Activated CD4-positive, alpha-beta T cell treated with anti-CD3 and anti-CD28 coated beads for 36 hours (primary cell): ENCODE measurements at regions of chr1 and their contacts with region 1.

Region 1: DNA sequence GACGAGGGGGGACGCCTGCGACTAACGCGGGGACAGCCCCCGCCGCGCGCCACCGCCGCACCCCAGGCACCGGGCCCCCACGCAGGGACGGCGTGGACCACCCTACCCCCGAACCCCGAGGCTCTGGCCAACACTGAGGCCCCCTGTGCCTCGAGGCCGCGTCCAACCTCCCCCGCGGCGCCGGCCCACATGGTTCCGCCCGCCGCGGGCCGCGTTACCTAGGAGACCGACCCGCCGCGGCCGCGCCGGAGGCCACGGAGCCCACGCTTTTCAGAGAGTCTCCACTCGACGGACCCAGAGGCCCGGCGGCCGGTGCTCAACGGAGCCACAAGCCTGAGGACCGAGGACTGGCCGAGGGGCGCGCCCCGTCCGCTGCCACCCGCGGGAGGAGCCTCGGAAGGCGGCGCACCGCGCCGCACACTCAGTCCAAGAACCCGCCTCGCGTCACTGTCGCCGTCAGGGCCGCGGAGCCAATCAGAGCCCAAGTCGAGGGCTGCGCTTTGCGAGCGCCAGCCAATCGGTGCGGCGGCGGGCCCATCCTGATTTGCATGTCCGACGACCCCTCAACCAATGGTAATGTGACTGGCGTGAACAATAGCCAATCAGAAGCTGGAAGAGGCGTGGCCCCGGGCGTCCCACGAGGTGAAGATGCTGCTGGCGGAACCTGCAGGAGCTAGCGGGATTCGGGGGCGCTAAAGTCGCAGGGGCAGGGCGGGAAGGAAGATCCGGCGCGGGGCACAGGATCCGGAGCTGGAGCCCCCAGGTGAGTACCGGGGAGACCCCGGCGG is at the start of gene NPHP4:
- DNase-seq: peak; percentile 100
- ATAC-seq: peak; percentile 93
- H3K4me3 Mint-ChIP-seq: peak within 1 kb of the TSS; percentile 97
- H3K27ac Mint-ChIP-seq: peak within 1 kb of the TSS; percentile 96
- H3K4me1 Mint-ChIP-seq: peaks cover 25% of the 10 kb centered on the region
- H3K27me3 Mint-ChIP-seq: no peaks in the 10 kb centered on the region
- total RNA-seq, gene NPHP4: 12.9 to 14.1 TPM

Region 2: DNA sequence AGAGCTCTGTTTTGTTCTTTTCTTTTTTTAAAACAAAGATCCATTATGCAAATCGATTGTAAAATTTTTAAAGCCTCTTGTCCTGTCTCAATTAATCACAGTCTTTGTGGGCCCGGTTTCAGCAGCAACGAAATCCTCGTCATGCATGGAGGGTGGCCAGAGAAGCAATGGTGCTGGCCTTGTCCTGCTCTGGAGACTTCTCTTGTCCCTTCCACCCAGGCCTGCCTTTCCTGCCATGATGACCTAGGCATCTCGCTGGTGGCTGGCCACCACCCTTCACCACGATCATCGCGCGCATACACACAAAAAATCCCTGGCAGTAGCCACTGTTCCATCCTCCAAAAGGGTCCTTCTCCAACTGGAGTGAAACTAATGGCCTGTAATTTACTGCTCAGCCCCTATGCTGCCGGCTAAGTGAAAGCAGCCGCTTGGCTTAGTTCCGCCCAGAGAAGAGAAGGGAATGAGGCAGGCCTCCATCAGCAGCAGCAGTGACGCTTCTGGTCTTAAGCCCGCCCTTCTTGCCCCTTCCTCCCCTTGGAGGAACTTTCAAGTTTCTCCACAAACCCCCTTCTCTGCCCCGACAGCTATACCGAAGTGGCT is 309.5 kb before region 1 on chr1:
- CTCF ChIA-PET with region 1: no interaction called
- POLR2A ChIA-PET with region 1: no interaction called
- intact Hi-C with region 1: no loop called
- DNase-seq: no peak
- ATAC-seq: no peak
- H3K4me3 Mint-ChIP-seq: no peak overlapping the region
- H3K27ac Mint-ChIP-seq: no peak overlapping the region
- H3K4me1 Mint-ChIP-seq: no peaks in the 10 kb centered on the region
- H3K27me3 Mint-ChIP-seq: peaks cover 14% of the 10 kb centered on the region

Region 3: DNA sequence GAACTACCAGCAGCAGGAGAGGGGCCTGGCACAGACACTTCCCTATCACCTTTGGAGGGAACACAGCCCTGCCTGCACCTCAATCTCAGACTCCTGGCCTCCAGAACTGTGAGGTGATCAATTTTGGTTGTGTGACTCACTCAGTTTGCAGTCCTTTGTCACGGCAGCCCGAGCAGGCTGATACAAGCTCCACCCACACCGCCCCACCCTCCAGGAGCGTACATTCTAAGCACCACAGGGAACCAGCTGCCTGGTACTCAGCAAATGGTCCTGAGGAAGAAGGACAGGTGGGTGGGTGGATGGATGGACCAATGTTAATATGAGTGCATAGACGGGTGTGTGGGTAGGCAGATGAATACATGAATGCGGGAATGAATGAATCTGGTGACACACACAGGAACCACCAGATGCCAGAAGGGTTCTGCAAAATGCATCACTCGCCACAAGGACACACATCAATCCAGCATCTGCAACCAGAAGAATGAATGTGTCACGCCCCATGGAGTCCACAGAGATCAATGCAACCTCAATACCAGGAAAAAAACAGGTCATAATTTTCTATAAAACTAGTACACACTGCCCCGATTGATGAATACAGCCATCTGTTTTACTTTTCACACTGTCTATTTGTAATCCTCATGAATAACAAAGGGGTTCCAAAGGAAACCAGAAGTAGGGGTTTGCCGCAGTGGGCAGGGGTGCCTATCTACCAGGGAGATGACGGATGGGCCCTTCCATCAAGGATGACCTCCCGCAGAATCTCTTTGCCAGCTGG is 284.5 kb before region 1 on chr1:
- CTCF ChIA-PET with region 1: no interaction called
- POLR2A ChIA-PET with region 1: no interaction called
- intact Hi-C with region 1: no loop called
- DNase-seq: peak; percentile 9
- ATAC-seq: no peak
- H3K4me3 Mint-ChIP-seq: no peak overlapping the region
- H3K27ac Mint-ChIP-seq: no peak overlapping the region
- H3K4me1 Mint-ChIP-seq: no peaks in the 10 kb centered on the region
- H3K27me3 Mint-ChIP-seq: no peaks in the 10 kb centered on the region

Region 4: GRCh38 chr1:6026095-6026809 is 34.0 kb after region 1 on chr1:
- CTCF ChIA-PET with region 1: interaction called, 3 read pairs
- POLR2A ChIA-PET with region 1: interaction called, 15 read pairs
- intact Hi-C with region 1: loop called (anchors 1 kb)
- DNase-seq: peak; percentile 97
- ATAC-seq: peak; percentile 81
- H3K4me3 Mint-ChIP-seq: peak overlapping the region; percentile 97
- H3K27ac Mint-ChIP-seq: peak overlapping the region; percentile 97
- H3K4me1 Mint-ChIP-seq: peaks cover 40% of the 10 kb centered on the region
- H3K27me3 Mint-ChIP-seq: no peaks in the 10 kb centered on the region

Region 5: DNA sequence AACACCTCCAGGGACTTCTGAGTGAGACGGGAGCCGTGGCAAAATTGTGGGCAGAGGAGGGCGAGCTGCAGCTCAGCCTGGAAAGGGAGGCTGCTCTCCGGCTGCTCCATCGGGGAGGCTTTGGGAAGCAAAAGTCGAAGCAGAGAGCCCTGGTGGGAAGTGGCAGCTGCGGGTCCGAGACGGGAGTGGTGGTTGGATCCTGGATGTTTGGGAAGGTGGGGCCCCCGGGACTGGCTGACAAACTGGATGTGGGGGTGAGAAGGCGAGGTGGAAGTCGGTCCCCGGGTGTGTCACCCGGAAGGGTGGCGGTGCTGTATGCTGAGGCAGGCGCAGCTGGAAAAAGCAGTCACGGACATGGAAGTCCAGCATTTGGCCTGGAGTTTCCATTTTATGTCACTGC is 105.6 kb after region 1 on chr1:
- CTCF ChIA-PET with region 1: no interaction called
- POLR2A ChIA-PET with region 1: no interaction called
- intact Hi-C with region 1: no loop called
- DNase-seq: no peak
- ATAC-seq: no peak
- H3K4me3 Mint-ChIP-seq: no peak overlapping the region
- H3K27ac Mint-ChIP-seq: no peak overlapping the region
- H3K4me1 Mint-ChIP-seq: no peaks in the 10 kb centered on the region
- H3K27me3 Mint-ChIP-seq: no peaks in the 10 kb centered on the region

Region 6: DNA sequence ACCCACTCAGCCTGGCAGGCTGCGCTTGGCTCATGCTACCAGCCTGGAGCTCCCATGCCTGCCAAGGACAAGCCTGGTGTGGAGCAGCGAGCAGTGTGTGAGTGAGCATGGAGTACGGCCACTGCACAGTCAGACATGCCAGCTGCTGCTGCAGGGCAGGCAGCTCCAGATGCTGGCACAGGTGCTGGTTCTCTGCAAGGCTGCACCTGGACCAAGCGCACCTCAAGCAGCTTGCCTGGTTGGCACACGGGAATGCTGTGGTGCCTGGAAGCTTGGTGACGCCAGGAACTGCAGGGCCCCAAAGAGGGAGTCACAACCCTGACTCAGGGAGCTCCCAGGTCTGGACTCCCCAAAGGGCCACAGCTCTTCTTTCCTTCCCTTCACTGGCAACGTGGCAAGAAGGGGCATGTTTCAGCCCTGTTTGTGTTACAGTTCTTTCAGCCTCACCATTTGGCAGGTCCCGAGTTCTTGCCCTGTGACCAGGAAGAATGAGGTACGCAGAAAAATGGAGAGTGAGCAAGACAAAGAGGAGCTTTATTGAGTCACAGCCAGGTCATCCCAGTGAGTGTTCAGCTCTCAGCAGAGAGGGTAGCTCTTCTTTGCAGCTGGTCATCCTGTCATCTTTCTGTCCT is 375.3 kb after region 1 on chr1:
- CTCF ChIA-PET with region 1: no interaction called
- POLR2A ChIA-PET with region 1: no interaction called
- intact Hi-C with region 1: no loop called
- DNase-seq: no peak
- ATAC-seq: no peak
- H3K4me3 Mint-ChIP-seq: no peak overlapping the region
- H3K27ac Mint-ChIP-seq: no peak overlapping the region
- H3K4me1 Mint-ChIP-seq: peaks cover 26% of the 10 kb centered on the region
- H3K27me3 Mint-ChIP-seq: no peaks in the 10 kb centered on the region

Region 7: GRCh38 chr1:6464514-6464836 is 472.3 kb after region 1 on chr1:
- CTCF ChIA-PET with region 1: no interaction called
- POLR2A ChIA-PET with region 1: no interaction called
- intact Hi-C with region 1: loop called in 1 of 2 experiments (anchors 10 kb)
- DNase-seq: peak; percentile 80
- ATAC-seq: peak; percentile 21
- H3K4me3 Mint-ChIP-seq: peak overlapping the region; percentile 84
- H3K27ac Mint-ChIP-seq: peak overlapping the region; percentile 83
- H3K4me1 Mint-ChIP-seq: peaks cover 50% of the 10 kb centered on the region
- H3K27me3 Mint-ChIP-seq: no peaks in the 10 kb centered on the region

Region 8: GRCh38 chr1:6701437-6702153 is 709.4 kb after region 1 on chr1 and contains the start of gene DNAJC11:
- CTCF ChIA-PET with region 1: no interaction called
- POLR2A ChIA-PET with region 1: no interaction called
- intact Hi-C with region 1: loop called in 1 of 2 experiments (anchors 2 kb)
- DNase-seq: peak; percentile 93
- ATAC-seq: peak; percentile 98
- H3K4me3 Mint-ChIP-seq: peak within 1 kb of the TSS; percentile 90
- H3K27ac Mint-ChIP-seq: peak within 1 kb of the TSS; percentile 92
- H3K4me1 Mint-ChIP-seq: peaks cover 28% of the 10 kb centered on the region
- H3K27me3 Mint-ChIP-seq: no peaks in the 10 kb centered on the region
- total RNA-seq, gene DNAJC11: 53.2 to 62.0 TPM